Activated CD8-positive, alpha-beta memory T cell treated with anti-CD3 and anti-CD28 coated beads, Interleukin-2, amount 10 ng/mL, durations not matched to agents 7 days and 5 days (primary cell): ENCODE measurements at regions of chr5 and their contacts with region 1.

Region 1: GRCh38 chr5:154215571-154216325 is 25.2 kb downstream of the GALNT10 start:
- DNase-seq: no peak
- ATAC-seq: no peak
- H3K4me3 Mint-ChIP-seq: no peak overlapping the region
- H3K27ac Mint-ChIP-seq: no peak overlapping the region
- H3K4me1 Mint-ChIP-seq: peaks cover 57% of the 10 kb centered on the region
- H3K27me3 Mint-ChIP-seq: no peaks in the 10 kb centered on the region

Region 2: DNA sequence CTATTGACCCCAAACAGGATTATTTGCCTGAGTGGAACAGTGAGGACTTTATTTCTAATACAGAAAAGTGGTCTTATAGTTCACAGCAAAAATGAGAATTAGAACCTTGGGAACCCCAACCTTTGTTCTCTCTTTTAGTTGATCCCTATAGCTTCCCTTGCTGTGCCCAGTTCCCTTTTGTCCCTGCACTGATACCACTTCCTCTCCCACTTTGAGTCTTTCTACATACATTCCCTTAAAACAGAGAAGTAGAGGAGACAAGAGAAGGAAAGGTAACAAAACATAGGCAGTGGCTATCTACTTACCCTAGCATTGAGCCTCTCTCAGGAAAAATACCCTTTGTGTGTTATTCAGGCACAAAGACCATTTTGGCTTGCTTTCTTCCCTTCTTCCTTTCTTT is 423.4 kb before region 1 on chr5:
- CTCF ChIA-PET with region 1: no interaction called
- DNase-seq: no peak
- ATAC-seq: no peak
- H3K4me3 Mint-ChIP-seq: no peak overlapping the region
- H3K27ac Mint-ChIP-seq: no peak overlapping the region
- H3K4me1 Mint-ChIP-seq: peaks cover 1% of the 10 kb centered on the region
- H3K27me3 Mint-ChIP-seq: no peaks in the 10 kb centered on the region

Region 3: DNA sequence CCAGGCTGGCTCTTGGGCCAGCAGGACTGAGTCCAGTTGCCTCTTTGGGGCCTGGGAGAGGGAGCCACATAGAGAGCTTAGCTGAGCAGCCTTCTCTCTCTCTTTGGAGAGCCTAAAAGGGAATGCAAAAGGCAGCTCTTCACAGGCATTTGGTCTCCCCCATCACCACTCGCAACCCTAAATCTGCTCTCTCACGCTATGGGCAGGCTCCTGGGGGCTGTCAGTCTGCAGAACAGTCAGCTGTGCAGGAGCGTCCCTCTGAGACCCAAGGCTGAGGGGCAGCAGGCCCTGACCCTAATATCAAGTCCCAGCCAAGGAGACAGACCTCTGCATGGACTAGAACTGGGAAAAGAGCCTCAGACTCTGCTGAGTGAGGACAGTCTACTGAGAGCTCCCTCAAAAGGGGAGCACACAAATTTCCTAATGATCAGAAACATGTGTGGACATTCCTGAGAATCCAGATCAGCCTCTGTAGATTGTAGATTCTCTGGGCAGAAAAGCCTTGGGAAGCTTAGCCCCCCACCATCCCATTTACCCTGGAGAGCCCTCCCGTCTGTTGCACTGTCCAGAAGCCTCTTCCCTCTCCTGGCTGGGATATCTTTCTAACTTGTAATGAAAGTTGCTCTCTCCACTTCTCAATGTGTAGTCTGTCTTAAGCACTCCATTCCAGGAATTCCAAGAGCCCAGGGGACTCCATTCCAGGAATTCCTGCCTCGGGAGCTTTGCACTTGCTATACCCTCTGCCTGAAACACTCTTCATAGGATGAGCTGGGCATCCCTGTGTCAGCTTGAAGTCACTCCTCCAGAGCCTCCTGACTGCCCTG is 256.4 kb before region 1 on chr5:
- CTCF ChIA-PET with region 1: no interaction called
- DNase-seq: no peak
- ATAC-seq: no peak
- H3K4me3 Mint-ChIP-seq: no peak overlapping the region
- H3K27ac Mint-ChIP-seq: no peak overlapping the region
- H3K4me1 Mint-ChIP-seq: peaks cover 5% of the 10 kb centered on the region
- H3K27me3 Mint-ChIP-seq: peaks cover 8% of the 10 kb centered on the region

Region 4: GRCh38 chr5:154196955-154197652 is 18.6 kb before region 1 on chr5:
- CTCF ChIA-PET with region 1: interaction called, 11 read pairs
- DNase-seq: no peak
- ATAC-seq: peak; percentile 13
- H3K4me3 Mint-ChIP-seq: no peak overlapping the region
- H3K27ac Mint-ChIP-seq: peak overlapping the region; percentile 91
- H3K4me1 Mint-ChIP-seq: peaks cover 68% of the 10 kb centered on the region
- H3K27me3 Mint-ChIP-seq: no peaks in the 10 kb centered on the region

Region 5: DNA sequence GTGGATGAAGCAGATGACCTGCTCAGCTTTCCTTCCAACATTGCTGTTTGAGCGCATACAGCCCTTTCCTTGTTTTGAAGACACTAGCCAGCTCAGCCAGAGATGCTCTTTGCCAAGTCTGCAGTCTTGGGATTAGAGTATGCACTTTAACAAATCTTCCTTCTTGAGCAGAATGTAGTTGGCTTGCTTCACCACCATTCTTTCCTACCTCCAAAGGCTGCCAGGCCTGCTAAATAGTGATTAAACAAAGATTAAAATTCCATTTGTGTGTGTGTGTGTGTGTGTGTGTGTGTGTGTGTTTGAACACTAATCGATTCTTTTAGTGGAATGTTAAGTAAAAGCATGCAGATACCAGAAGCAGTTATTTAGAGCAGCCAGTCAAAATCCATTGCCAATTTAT is 72.4 kb after region 1 on chr5:
- CTCF ChIA-PET with region 1: no interaction called
- DNase-seq: no peak
- ATAC-seq: no peak
- H3K4me3 Mint-ChIP-seq: no peak overlapping the region
- H3K27ac Mint-ChIP-seq: no peak overlapping the region
- H3K4me1 Mint-ChIP-seq: peaks cover 18% of the 10 kb centered on the region
- H3K27me3 Mint-ChIP-seq: no peaks in the 10 kb centered on the region